ENCODE measurements at regions of chr11 and their contacts with region 1.

Region 1: DNA sequence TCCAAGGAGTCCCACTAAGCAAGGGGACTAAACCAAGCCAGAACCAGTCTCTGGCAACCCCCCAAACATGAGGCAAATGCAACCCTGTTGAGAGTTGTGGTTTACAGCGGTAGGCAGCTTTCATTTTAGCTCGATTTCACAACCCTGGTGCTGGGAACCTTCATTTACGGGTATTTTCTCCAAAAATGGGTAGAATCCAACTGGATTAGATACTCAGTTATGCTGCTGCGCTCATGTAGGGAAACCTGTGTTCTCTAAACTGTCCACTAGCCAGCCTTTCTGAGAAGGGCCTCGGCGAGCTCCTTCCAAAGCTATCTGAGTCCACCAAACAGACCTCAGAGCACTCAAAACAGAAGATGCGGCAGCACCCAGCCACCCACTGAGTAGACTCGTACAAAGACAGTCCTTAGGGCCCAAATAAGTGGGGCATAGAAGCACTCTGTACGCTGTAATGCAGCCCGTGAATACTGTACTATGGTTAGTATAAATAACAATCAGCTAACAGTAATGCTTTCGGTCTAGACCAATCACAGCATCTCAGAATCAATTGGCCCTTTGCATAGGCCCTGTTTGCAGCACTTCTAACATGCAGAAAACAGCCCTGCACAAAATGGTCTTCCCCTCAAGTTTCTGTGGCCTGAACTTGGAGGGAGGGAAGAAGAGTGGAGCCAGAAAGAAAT is 104.7 kb downstream of the ETS1 start:
- DNase-seq: peak; percentile 83
- ATAC-seq: peak; percentile 81
- H3K4me3 Mint-ChIP-seq: peak overlapping the region; percentile 67
- H3K27ac Mint-ChIP-seq: peak overlapping the region; percentile 95
- H3K4me1 Mint-ChIP-seq: peaks cover 95% of the 10 kb centered on the region
- H3K27me3 Mint-ChIP-seq: no peaks in the 10 kb centered on the region

Region 2: DNA sequence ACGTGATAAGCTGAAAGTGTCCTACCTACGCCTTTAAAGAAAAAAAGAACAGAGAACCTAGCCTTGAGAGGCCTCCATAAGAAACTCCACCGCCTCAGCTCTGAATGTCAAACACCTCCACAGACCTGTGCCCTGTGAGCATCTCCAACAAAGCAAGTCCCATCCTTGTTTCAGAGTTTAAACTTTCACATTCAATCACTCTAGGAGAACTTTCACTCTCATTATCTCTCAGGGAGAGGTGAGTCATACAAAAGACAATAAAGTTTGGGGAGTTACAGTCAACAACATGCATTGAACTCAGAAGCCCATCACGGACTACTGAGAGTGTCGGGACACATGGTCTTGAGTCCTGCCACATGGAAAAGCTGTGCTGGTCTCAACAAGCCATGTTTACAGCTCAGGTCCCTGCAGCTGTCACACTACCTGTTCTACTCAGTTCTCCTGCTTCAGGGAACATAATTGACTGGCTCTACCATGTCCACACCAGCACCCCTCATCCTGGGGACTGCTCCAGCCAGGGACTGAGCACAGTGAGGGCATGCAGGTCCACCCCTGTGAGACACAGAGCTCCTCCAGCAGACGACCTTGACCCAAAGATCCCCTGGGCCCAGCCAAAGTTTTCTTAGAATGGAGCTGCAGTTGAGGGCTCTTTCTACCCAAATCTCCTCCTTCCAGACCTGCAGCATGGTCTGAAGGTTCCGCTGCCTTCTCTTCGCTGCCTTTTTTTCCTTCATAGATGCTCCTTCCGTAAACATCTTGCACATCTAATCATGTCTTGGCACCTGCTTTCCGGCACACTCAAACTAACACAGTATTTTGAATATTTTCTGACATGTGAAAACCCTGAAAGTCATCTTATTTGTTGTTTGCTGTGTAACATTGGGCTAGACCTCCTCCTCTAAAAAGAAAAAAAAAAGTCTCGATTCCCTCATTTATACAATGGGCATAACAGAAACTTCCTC is 10.2 kb before region 1 on chr11:
- CTCF ChIA-PET with region 1: interaction called, 14 read pairs
- DNase-seq: peak; percentile 71
- ATAC-seq: peak; percentile 69
- H3K4me3 Mint-ChIP-seq: peak overlapping the region; percentile 59
- H3K27ac Mint-ChIP-seq: peak overlapping the region; percentile 95
- H3K4me1 Mint-ChIP-seq: peaks cover 95% of the 10 kb centered on the region
- H3K27me3 Mint-ChIP-seq: no peaks in the 10 kb centered on the region

Region 3: GRCh38 chr11:128512474-128512996 is 29.9 kb after region 1 on chr11:
- CTCF ChIA-PET with region 1: interaction called, 10 read pairs
- DNase-seq: peak; percentile 75
- ATAC-seq: peak; percentile 54
- H3K4me3 Mint-ChIP-seq: peak overlapping the region; percentile 99
- H3K27ac Mint-ChIP-seq: peak overlapping the region; percentile 99
- H3K4me1 Mint-ChIP-seq: peaks cover 89% of the 10 kb centered on the region
- H3K27me3 Mint-ChIP-seq: no peaks in the 10 kb centered on the region

Region 4: GRCh38 chr11:129061466-129062194 is 579.0 kb after region 1 on chr11:
- CTCF ChIA-PET with region 1: no interaction called
- DNase-seq: no peak
- ATAC-seq: no peak
- H3K4me3 Mint-ChIP-seq: no peak overlapping the region
- H3K27ac Mint-ChIP-seq: no peak overlapping the region
- H3K4me1 Mint-ChIP-seq: no peaks in the 10 kb centered on the region
- H3K27me3 Mint-ChIP-seq: peaks cover 4% of the 10 kb centered on the region